Activated CD4-positive, alpha-beta T cell treated with anti-CD3 and anti-CD28 coated beads for 36 hours (primary cell): ENCODE measurements at regions of chr6 and their contacts with region 1.

Region 1: GRCh38 chr6:13908955-13909381 is 15.8 kb upstream of the RNF182 start:
- DNase-seq: peak; percentile 63
- ATAC-seq: peak; percentile 74
- H3K4me3 Mint-ChIP-seq: no peak overlapping the region
- H3K27ac Mint-ChIP-seq: no peak overlapping the region
- H3K4me1 Mint-ChIP-seq: peaks cover 2% of the 10 kb centered on the region
- H3K27me3 Mint-ChIP-seq: peaks cover 28% of the 10 kb centered on the region

Region 2: GRCh38 chr6:13838616-13839015 is 70.4 kb before region 1 on chr6:
- CTCF ChIA-PET with region 1: no interaction called
- POLR2A ChIA-PET with region 1: no interaction called
- intact Hi-C with region 1: no loop called
- DNase-seq: no peak
- ATAC-seq: no peak
- H3K4me3 Mint-ChIP-seq: no peak overlapping the region
- H3K27ac Mint-ChIP-seq: no peak overlapping the region
- H3K4me1 Mint-ChIP-seq: peaks cover 6% of the 10 kb centered on the region
- H3K27me3 Mint-ChIP-seq: no peaks in the 10 kb centered on the region

Region 3: GRCh38 chr6:13924146-13924948 is 15.4 kb after region 1 on chr6:
- CTCF ChIA-PET with region 1: interaction called, 10 read pairs
- POLR2A ChIA-PET with region 1: no interaction called
- intact Hi-C with region 1: no loop called
- DNase-seq: peak; percentile 31
- ATAC-seq: peak; percentile 88
- H3K4me3 Mint-ChIP-seq: peak overlapping the region; percentile 71
- H3K27ac Mint-ChIP-seq: no peak overlapping the region
- H3K4me1 Mint-ChIP-seq: peaks cover 14% of the 10 kb centered on the region
- H3K27me3 Mint-ChIP-seq: peaks cover 51% of the 10 kb centered on the region

Region 4: GRCh38 chr6:14046476-14047068 is 137.6 kb after region 1 on chr6:
- CTCF ChIA-PET with region 1: interaction called, 17 read pairs
- POLR2A ChIA-PET with region 1: no interaction called
- intact Hi-C with region 1: loop called (anchors 1 kb)
- DNase-seq: peak; percentile 70
- ATAC-seq: peak; percentile 95
- H3K4me3 Mint-ChIP-seq: no peak overlapping the region
- H3K27ac Mint-ChIP-seq: no peak overlapping the region
- H3K4me1 Mint-ChIP-seq: no peaks in the 10 kb centered on the region
- H3K27me3 Mint-ChIP-seq: peaks cover 22% of the 10 kb centered on the region

Region 5: GRCh38 chr6:14144678-14145113 is 235.7 kb after region 1 on chr6:
- CTCF ChIA-PET with region 1: interaction called, 19 read pairs
- POLR2A ChIA-PET with region 1: no interaction called
- intact Hi-C with region 1: loop called (anchors 1 kb)
- DNase-seq: peak; percentile 87
- ATAC-seq: peak; percentile 95
- H3K4me3 Mint-ChIP-seq: no peak overlapping the region
- H3K27ac Mint-ChIP-seq: no peak overlapping the region
- H3K4me1 Mint-ChIP-seq: peaks cover 5% of the 10 kb centered on the region
- H3K27me3 Mint-ChIP-seq: no peaks in the 10 kb centered on the region